ENCODE measurements at regions of chr1 and their contacts with region 1.

Region 1: GRCh38 chr1:206663832-206664652 is 20.7 kb upstream of the MAPKAPK2 start:
- DNase-seq: peak; percentile 84
- ATAC-seq: peak; percentile 82
- H3K4me3 Mint-ChIP-seq: no peak overlapping the region
- H3K27ac Mint-ChIP-seq: no peak overlapping the region
- H3K4me1 Mint-ChIP-seq: peaks cover 33% of the 10 kb centered on the region
- H3K27me3 Mint-ChIP-seq: peaks cover 22% of the 10 kb centered on the region
- CTCF ChIP-seq: peak; percentile 92

Region 2: GRCh38 chr1:206469933-206470691 is 193.9 kb before region 1 on chr1 and contains the start of gene IKBKE:
- CTCF ChIA-PET with region 1: interaction called, 24 read pairs
- POLR2A ChIA-PET with region 1: interaction called, 3 read pairs
- intact Hi-C with region 1: no loop called
- DNase-seq: peak; percentile 62
- ATAC-seq: peak; percentile 21
- H3K4me3 Mint-ChIP-seq: peak within 1 kb of the TSS; percentile 73
- H3K27ac Mint-ChIP-seq: peak within 1 kb of the TSS; percentile 94
- H3K4me1 Mint-ChIP-seq: peaks cover 90% of the 10 kb centered on the region
- H3K27me3 Mint-ChIP-seq: no peaks in the 10 kb centered on the region
- CTCF ChIP-seq: no peak
- total RNA-seq, gene IKBKE: 14.3 to 14.9 TPM

Region 3: GRCh38 chr1:206544562-206545257 is 119.3 kb before region 1 on chr1:
- CTCF ChIA-PET with region 1: interaction called, 27 read pairs
- POLR2A ChIA-PET with region 1: no interaction called
- intact Hi-C with region 1: no loop called
- DNase-seq: peak; percentile 87
- ATAC-seq: peak; percentile 91
- H3K4me3 Mint-ChIP-seq: no peak overlapping the region
- H3K27ac Mint-ChIP-seq: peak overlapping the region; percentile 57
- H3K4me1 Mint-ChIP-seq: peaks cover 25% of the 10 kb centered on the region
- H3K27me3 Mint-ChIP-seq: no peaks in the 10 kb centered on the region
- CTCF ChIP-seq: peak; percentile 94

Region 4: GRCh38 chr1:206606856-206607255 is 57.2 kb before region 1 on chr1:
- CTCF ChIA-PET with region 1: interaction called, 84 read pairs
- POLR2A ChIA-PET with region 1: interaction called, 3 read pairs
- intact Hi-C with region 1: loop called (anchors 10 kb)
- DNase-seq: peak; percentile 49
- ATAC-seq: no peak
- H3K4me3 Mint-ChIP-seq: no peak overlapping the region
- H3K27ac Mint-ChIP-seq: peak overlapping the region; percentile 36
- H3K4me1 Mint-ChIP-seq: peaks cover 44% of the 10 kb centered on the region
- H3K27me3 Mint-ChIP-seq: no peaks in the 10 kb centered on the region
- CTCF ChIP-seq: peak; percentile 53

Region 5: DNA sequence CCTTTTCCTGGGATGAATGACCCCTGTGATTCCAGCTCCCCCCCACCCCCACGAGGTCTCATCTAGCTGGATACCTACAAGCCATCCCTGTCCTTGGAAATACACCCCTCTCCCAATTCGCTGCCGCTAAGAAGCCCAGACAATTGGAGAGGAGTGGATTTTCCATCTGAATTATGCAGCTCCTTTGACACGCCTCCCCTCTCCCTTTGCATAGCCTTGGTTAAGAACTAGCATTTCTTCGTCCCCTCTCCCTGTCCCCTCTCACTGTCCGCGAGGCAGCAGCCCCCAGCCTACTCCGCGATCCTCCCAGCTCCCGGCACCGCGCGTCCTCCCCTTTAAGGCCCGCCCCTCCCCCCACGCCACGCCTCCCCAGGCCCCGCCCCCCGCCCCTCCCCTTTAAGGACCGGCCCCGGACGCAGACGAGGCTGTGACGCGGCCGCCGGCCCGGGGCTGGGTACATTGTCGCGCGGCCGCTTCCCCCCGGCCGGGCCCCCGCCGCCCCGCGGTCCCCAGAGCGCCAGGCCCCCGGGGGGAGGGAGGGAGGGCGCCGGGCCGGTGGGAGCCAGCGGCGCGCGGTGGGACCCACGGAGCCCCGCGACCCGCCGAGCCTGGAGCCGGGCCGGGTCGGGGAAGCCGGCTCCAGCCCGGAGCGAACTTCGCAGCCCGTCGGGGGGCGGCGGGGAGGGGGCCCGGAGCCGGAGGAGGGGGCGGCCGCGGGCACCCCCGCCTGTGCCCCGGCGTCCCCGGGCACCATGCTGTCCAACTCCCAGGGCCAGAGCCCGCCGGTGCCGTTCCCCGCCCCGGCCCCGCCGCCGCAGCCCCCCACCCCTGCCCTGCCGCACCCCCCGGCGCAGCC is 20.7 kb after region 1 on chr1 and contains the start of gene MAPKAPK2:
- CTCF ChIA-PET with region 1: interaction called, 34 read pairs
- POLR2A ChIA-PET with region 1: interaction called, 4 read pairs
- intact Hi-C with region 1: no loop called
- DNase-seq: peak; percentile 82
- ATAC-seq: peak; percentile 75
- H3K4me3 Mint-ChIP-seq: peak within 1 kb of the TSS; percentile 99
- H3K27ac Mint-ChIP-seq: peak within 1 kb of the TSS; percentile 96
- H3K4me1 Mint-ChIP-seq: peaks cover 54% of the 10 kb centered on the region
- H3K27me3 Mint-ChIP-seq: no peaks in the 10 kb centered on the region
- CTCF ChIP-seq: no peak
- total RNA-seq, gene MAPKAPK2: 50.4 to 51.4 TPM

Region 6: GRCh38 chr1:206725109-206725963 is 61.3 kb after region 1 on chr1:
- CTCF ChIA-PET with region 1: interaction called, 19 read pairs
- POLR2A ChIA-PET with region 1: no interaction called
- intact Hi-C with region 1: no loop called
- DNase-seq: peak; percentile 83
- ATAC-seq: peak; percentile 57
- H3K4me3 Mint-ChIP-seq: no peak overlapping the region
- H3K27ac Mint-ChIP-seq: no peak overlapping the region
- H3K4me1 Mint-ChIP-seq: peaks cover 57% of the 10 kb centered on the region
- H3K27me3 Mint-ChIP-seq: no peaks in the 10 kb centered on the region
- CTCF ChIP-seq: peak; percentile 6